ENCODE measurements at regions of chr17 and their contacts with region 1.

Region 1: GRCh38 chr17:55238179-55238930 is 26.4 kb upstream of the HLF start:
- DNase-seq: peak; percentile 100
- H3K4me3 ChIP-seq: peak overlapping the region; percentile 68 to 71
- H3K27ac ChIP-seq: peak overlapping the region; percentile 6 to 76; a peak in 3 of 4 replicates
- H3K4me1 ChIP-seq: peaks cover 0 to 9% of the 10 kb centered on the region in 2 experiments; a peak in 3 of 4 replicates
- H3K27me3 ChIP-seq: no peaks in the 10 kb centered on the region
- CTCF ChIP-seq: no peak
- EP300 ChIP-seq: no peak; a peak in 2 of 4 replicates
- RAD21 ChIP-seq: peak; percentile 13

Region 2: DNA sequence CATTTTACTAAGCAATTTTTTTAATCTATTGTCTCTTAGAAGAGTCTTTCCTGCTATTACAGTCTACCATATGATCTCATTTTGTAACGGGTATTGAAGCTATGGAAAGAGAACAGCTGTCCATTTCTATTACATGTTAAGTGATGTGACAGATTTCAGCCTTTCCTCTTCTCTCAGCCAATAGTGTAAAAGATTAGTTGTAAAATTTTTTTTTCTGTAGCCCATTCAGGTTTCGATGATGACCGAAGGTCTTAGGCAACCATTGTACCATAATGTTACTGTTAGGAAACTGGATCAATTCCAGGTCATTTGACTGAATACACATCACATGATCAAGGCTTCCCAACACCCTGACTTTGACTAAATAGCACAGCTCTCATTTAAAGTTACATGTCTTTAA is 121.2 kb before region 1 on chr17:
- CTCF ChIA-PET with region 1: no interaction called
- POLR2A ChIA-PET with region 1: no interaction called
- DNase-seq: no peak
- H3K4me3 ChIP-seq: no peak overlapping the region
- H3K27ac ChIP-seq: no peak overlapping the region; a peak in 1 of 4 replicates
- H3K4me1 ChIP-seq: peaks cover 3 to 13% of the 10 kb centered on the region in 2 experiments; a peak in 2 of 4 replicates
- H3K27me3 ChIP-seq: no peaks in the 10 kb centered on the region
- CTCF ChIP-seq: no peak
- EP300 ChIP-seq: no peak
- RAD21 ChIP-seq: no peak

Region 3: DNA sequence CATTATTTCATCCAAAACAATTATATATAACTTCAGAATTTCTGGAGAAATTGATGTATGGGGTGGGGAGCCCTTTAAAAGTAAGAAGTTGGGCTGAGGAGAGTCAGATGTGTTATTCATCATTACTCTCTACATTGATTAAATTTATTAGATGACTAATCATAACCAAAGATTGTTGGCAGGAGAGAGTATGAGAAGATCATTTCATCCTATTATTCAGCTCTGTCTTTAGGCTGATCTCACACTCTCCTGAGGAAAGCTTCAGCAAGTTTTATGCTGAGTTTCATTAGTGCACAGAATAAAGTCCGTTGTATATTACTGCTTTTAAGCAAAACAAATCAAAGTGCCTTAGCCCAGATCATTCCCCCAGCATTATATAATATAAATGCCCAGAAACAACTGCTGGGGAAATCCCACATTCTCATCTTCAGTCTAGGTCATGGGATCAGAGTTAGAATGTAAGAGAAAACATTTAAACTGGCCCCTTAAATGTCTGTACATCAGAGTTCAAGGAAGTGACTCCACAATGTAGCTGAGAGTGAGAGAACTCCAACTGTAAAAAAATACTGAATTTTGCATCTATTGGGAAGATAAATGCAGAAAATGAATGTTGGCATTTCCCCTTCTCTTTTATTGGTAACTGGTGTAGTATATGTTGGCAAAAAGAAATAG is 103.7 kb before region 1 on chr17:
- CTCF ChIA-PET with region 1: no interaction called
- POLR2A ChIA-PET with region 1: no interaction called
- DNase-seq: no peak
- H3K4me3 ChIP-seq: no peak overlapping the region; a peak in 1 of 4 replicates
- H3K27ac ChIP-seq: peak overlapping the region; percentile 28 to 73; a peak in 3 of 4 replicates
- H3K4me1 ChIP-seq: no peaks in the 10 kb centered on the region; a peak in 1 of 4 replicates
- H3K27me3 ChIP-seq: no peaks in the 10 kb centered on the region
- CTCF ChIP-seq: no peak
- EP300 ChIP-seq: 0 out of 4 replicates have a peak, but pooled peaks of 1 of the 2 experiments have one; percentile 28
- RAD21 ChIP-seq: no peak

Region 4: DNA sequence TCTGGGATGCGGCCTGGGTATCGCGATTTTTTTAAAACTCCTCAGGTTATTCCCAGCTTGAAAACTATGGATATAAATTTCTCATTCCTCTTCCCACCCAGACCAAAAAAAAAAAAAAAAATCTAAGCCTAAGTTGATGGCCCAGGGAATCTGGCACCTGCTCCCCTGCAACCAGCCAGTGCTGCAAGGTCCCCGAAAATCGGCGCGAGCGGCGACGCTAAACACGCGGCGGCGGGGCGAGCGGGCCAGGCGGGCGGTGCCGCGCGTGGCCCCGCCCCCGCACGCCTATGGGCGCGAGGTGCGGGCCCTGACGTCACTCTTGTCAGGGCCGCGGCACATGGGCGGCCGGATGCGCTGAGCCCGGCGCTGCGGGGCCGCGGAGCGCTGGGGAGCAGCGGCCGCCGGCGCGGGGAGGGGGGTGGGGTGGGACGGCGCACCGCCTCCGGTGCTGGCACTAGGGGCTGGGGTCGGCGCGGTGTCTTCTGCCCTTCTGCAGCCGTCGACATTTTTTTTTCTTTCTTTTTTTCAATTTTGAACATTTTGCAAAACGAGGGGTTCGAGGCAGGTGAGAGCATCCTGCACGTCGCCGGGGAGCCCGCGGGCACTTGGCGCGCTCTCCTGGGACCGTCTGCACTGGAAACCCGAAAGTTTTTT is 26.4 kb after region 1 on chr17 and contains the start of gene HLF:
- CTCF ChIA-PET with region 1: interaction called, 60 read pairs
- POLR2A ChIA-PET with region 1: interaction called, 8 read pairs
- DNase-seq: peak; percentile 100
- H3K4me3 ChIP-seq: peak within 1 kb of the TSS; percentile 44 to 47
- H3K27ac ChIP-seq: no peak within 1 kb of the TSS
- H3K4me1 ChIP-seq: peaks cover 0 to 10% of the 10 kb centered on the region in 2 experiments; a peak in 2 of 4 replicates
- H3K27me3 ChIP-seq: peaks cover 20% of the 10 kb centered on the region
- CTCF ChIP-seq: no peak
- EP300 ChIP-seq: no peak
- RAD21 ChIP-seq: no peak; the same call in 1 of the 2 replicates
- polyA plus RNA-seq, gene HLF: 0.03 and 0.21 TPM in 2 replicates

Region 5: GRCh38 chr17:55285340-55286301 is 47.3 kb after region 1 on chr17:
- CTCF ChIA-PET with region 1: interaction called, 15 read pairs
- POLR2A ChIA-PET with region 1: no interaction called
- DNase-seq: no peak
- H3K4me3 ChIP-seq: no peak overlapping the region
- H3K27ac ChIP-seq: peak overlapping the region in 1 of 2 experiments; percentile 51; a peak in 1 of 4 replicates
- H3K4me1 ChIP-seq: peaks cover 0 to 15% of the 10 kb centered on the region in 2 experiments; a peak in 1 of 4 replicates
- H3K27me3 ChIP-seq: no peaks in the 10 kb centered on the region
- CTCF ChIP-seq: no peak
- EP300 ChIP-seq: no peak
- RAD21 ChIP-seq: no peak